GM18951 (cell line): ENCODE measurements at regions of chr4 and their contacts with region 1.

Region 1: DNA sequence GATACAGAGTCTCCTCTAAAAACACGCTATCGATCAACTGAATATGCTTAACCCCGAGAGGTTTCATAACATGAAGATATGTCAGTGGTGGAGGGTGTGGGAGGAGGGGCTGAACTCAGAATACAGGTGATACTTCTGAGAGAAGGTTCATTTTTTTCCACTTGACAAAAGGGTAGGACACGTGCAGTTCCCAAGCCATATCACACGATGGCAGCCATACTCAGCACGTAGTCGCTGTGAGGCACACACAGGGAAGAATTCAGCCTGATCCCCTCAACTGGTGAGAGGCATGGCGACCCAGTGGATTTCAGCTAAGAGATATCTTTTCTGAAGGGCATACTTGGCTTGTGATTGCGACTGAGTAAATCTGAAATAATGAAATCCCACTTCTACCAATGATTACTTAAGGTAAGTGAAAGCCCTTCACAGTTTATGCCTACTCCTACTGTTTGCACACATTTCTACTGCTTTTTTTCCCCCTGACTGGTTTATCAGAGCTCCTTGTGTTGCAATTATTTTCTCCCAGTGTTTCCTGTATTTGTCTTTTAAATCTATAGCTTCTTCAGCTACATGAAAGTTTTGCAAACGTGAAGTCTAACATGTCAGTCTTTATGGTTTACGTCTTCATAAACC is 133.1 kb downstream of the CORIN start:
- POLR2A ChIP-seq: no peak

Region 2: DNA sequence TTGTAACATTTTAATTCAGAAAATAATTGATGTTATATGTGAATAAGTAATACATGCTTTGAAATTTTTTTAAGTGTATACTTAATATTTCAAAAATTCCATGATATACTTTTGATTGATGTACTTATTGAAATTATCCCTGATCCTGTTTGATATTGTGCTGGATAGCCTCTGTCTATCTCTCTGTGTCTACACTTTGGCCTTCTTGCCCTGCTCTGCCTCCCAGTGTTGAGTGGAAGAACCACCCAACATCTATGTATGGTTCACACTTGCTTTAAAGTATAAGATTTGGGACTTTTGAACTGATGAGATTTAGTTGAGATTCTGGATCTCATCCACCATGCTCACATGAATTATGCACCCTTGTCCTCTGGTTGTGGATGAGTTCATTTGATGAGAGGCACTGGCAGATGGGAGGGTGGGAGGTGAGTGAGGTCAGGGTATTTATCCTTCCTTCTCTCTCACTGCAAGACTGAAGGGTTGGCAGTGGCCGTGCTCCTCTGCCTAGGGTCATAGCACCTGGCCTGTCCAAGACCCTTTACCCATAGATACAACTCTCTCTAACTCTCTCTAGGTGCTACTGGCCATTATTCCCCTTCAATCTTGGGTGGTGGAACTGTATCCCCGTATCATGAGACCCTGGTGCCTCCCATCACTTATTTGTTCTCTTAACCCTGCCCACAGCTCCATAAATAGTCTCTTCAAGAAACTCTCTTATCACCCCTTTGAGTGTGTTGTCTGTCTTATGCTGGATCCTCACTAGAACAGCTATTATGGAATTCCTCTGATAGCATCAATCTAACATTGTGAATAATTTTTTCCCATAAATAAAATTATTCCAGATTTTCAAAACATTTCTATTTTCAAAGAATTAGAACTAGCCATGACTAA is 57.8 kb after region 1 on chr4:
- in situ Hi-C with region 1: no loop called
- POLR2A ChIP-seq: no peak

Region 3: GRCh38 chr4:47836641-47837093 is 131.9 kb after region 1 on chr4:
- in situ Hi-C with region 1: loop called (anchors 10 kb)
- POLR2A ChIP-seq: no peak

Region 4: DNA sequence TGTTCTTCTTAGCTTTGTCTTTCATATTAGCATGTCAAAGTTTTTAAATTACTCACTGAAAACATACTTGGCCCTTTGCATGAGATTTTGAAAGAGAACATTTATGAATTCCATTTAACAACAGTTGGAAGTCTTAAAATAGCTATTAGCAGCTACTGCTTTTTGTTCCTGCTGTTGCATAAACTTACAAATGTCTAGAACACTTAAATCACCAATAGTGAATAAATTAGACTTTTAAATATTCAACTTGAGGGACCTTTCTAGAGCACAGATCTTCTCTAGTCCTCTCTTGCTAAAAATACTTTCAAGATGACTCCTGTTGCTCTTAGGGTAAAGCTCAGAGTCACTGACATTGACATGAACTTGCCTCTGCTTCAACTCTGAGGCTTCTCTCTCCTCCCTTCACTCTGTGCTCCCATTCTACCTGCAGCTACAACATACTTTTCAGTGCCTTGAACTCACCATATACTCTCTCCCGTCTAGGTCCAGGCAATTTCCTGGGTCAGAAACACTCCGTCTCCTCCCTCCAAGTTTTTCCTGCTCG is 445.1 kb after region 1 on chr4:
- in situ Hi-C with region 1: no loop called
- POLR2A ChIP-seq: no peak